Upper lobe of right lung (tissue), 1 donor: ENCODE measurements at regions of chr15 and their contacts with region 1.

Region 1: GRCh38 chr15:49887659-49888322 is 231.2 kb downstream of the ATP8B4 start:
- DNase-seq: no peak
- ATAC-seq: no peak
- H3K4me3 ChIP-seq: no peak overlapping the region
- H3K27ac ChIP-seq: no peak overlapping the region
- H3K4me1 ChIP-seq: no peaks in the 10 kb centered on the region
- H3K27me3 ChIP-seq: no peaks in the 10 kb centered on the region
- CTCF ChIP-seq: no peak

Region 2: DNA sequence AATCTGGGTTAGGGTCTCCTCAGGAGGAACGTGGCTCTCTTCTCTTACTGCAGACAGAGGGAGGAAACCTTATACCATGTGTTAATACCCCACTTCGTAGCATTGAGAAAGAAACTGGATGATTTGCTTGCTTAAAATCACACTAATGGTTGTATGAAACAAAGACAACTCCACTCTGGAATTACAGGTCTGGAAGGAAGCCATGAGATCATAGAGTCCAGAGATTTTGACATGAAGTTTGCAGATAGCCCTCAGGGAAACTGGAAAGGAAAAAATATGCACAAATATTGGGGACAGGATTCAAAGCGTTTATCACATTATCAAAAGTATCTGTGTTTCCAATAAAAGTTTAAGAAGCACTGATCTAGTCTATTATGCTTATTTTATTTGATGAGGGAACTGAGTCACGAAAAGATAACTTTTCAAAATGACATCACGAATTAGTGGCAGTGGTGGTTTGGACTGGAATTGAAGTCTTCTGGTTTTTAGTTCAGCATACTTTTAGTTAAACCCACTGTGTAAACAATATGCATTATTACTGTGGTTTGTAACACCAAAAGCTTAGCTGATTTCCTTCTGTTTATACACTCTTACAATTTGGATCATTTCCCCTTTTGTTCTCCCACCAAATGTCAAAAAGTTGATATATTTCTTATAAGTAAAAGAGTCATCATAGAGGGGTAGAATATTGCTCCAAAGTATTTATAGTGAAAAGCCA is 448.0 kb before region 1 on chr15:
- intact Hi-C with region 1: loop called (anchors 10 kb)
- DNase-seq: no peak
- ATAC-seq: no peak
- H3K4me3 ChIP-seq: no peak overlapping the region
- H3K27ac ChIP-seq: no peak overlapping the region
- H3K4me1 ChIP-seq: peaks cover 6% of the 10 kb centered on the region
- H3K27me3 ChIP-seq: no peaks in the 10 kb centered on the region
- CTCF ChIP-seq: no peak

Region 3: DNA sequence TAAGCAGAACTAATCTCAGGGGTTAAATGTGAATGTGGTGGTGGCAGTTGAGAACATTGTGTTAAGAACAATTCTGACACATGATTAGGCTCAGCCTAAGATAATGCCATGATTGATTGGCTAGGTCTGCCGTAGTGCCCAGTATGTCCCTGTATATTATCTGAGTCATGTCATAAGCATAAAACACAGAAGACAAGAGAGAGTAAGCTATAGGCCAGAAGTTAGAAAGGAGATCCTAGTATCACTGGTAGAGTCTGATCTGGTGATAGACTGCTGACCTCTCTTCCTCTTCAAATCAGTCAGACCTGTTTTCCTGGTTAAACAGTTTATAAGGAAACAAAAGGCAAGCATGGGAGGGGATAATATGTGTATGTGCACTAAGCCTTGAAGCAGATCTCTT is 261.3 kb after region 1 on chr15:
- intact Hi-C with region 1: no loop called
- DNase-seq: no peak
- ATAC-seq: no peak
- H3K4me3 ChIP-seq: no peak overlapping the region
- H3K27ac ChIP-seq: no peak overlapping the region
- H3K4me1 ChIP-seq: no peaks in the 10 kb centered on the region
- H3K27me3 ChIP-seq: no peaks in the 10 kb centered on the region
- CTCF ChIP-seq: no peak